Naive thymus-derived CD4-positive, alpha-beta T cell (primary cell): ENCODE measurements at regions of chr16 and their contacts with region 1.

Region 1: DNA sequence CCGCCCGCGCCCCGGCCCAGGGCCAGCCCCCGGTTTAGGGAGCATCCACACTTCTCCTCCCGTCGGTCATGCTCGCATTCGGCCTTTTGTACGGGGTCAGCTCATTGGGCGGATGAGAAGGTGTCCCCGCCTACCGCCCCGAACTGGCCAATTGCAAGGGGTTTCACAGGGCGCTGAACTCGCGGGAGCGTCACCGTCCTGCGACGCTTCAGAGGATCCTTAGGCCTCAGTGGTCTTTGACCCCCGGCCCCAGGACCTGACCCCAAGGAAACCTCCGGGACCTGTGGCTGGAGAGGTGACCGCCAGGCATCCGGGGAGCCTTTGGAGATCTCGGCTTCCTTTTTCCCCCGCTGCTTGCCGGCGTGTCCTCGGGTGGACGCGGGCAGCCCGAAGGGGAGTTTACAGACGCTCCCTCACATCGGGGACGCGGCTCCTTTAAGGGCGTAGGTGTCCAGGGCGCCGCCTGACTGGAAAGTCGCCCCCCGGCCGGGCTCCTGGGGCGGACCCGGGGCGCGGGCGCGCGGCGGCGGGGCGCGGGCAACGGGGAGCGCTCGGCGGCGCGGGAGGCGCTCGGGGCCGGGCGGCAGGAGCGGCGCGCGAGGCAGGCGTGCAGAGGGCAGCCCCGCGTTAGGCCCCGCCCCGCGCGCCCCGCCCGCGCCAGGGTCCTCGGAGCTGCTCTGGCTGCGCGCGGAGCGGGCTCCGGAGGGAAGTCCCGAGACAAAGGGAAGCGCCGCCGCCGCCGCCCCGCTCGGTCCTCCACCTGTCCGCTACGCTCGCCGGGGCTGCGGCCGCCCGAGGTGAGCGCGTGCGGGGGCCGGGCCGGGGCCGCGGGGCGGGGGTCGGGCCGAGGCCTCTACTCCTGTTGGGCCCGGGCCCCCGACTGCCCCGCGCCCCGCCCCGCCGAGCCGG is at the start of gene UBE2I:
- DNase-seq: peak; percentile 95 to 100 (median 99)
- ATAC-seq: peak; percentile 85
- H3K4me3 ChIP-seq: peak within 1 kb of the TSS; percentile 95
- H3K4me3 Mint-ChIP-seq: peak within 1 kb of the TSS; percentile 92 to 100 (median 98)
- H3K27ac ChIP-seq: peak within 1 kb of the TSS; percentile 99
- H3K27ac Mint-ChIP-seq: peak within 1 kb of the TSS; percentile 97 to 100 (median 99)
- H3K4me1 ChIP-seq: peaks cover 27 to 33% of the 10 kb centered on the region in 2 donors
- H3K4me1 Mint-ChIP-seq: peaks cover 15 to 56% (median 34%) of the 10 kb centered on the region in 7 donors
- H3K27me3 ChIP-seq: no peaks in the 10 kb centered on the region
- H3K27me3 Mint-ChIP-seq: no peaks in the 10 kb centered on the region
- total RNA-seq, gene UBE2I: 159 to 277 (median 203) TPM

Region 2: GRCh38 chr16:684067-684794 is 625.0 kb before region 1 on chr16 and contains the start of gene JMJD8:
- CTCF ChIA-PET with region 1: no interaction called
- POLR2A ChIA-PET with region 1: no interaction called
- intact Hi-C with region 1: loop called in 1 of 2 experiments (anchors 2 kb)
- DNase-seq: peak; percentile 88 to 97 (median 91)
- ATAC-seq: peak; percentile 75
- H3K4me3 ChIP-seq: peak within 1 kb of the TSS; percentile 52
- H3K4me3 Mint-ChIP-seq: peak within 1 kb of the TSS; percentile 58 to 87 (median 76)
- H3K27ac ChIP-seq: peak within 1 kb of the TSS; percentile 78
- H3K27ac Mint-ChIP-seq: peak within 1 kb of the TSS in 6 of 9 donors; percentile 38 to 82 (median 58)
- H3K4me1 ChIP-seq: peaks cover 9 to 36% of the 10 kb centered on the region in 2 donors
- H3K4me1 Mint-ChIP-seq: peaks cover 10 to 31% (median 22%) of the 10 kb centered on the region in 7 donors
- H3K27me3 ChIP-seq: no peaks in the 10 kb centered on the region
- H3K27me3 Mint-ChIP-seq: no peaks in the 10 kb centered on the region
- total RNA-seq, gene JMJD8: 26.8 to 48.1 (median 37.2) TPM

Region 3: GRCh38 chr16:1342526-1343427 is 33.5 kb after region 1 on chr16:
- CTCF ChIA-PET with region 1: no interaction called
- POLR2A ChIA-PET with region 1: interaction called, 7 read pairs
- intact Hi-C with region 1: loop called (anchors 1 to 2 kb)
- DNase-seq: peak; percentile 85 to 97 (median 94)
- ATAC-seq: peak; percentile 97
- H3K4me3 ChIP-seq: peak overlapping the region; percentile 66
- H3K4me3 Mint-ChIP-seq: peak overlapping the region; percentile 60 to 86 (median 80)
- H3K27ac ChIP-seq: no peak overlapping the region
- H3K27ac Mint-ChIP-seq: peak overlapping the region in 8 of 9 donors; percentile 14 to 79 (median 45)
- H3K4me1 ChIP-seq: peaks cover 11 to 17% of the 10 kb centered on the region in 2 donors
- H3K4me1 Mint-ChIP-seq: peaks cover 7 to 18% (median 15%) of the 10 kb centered on the region in 7 donors
- H3K27me3 ChIP-seq: no peaks in the 10 kb centered on the region
- H3K27me3 Mint-ChIP-seq: no peaks in the 10 kb centered on the region

Region 4: DNA sequence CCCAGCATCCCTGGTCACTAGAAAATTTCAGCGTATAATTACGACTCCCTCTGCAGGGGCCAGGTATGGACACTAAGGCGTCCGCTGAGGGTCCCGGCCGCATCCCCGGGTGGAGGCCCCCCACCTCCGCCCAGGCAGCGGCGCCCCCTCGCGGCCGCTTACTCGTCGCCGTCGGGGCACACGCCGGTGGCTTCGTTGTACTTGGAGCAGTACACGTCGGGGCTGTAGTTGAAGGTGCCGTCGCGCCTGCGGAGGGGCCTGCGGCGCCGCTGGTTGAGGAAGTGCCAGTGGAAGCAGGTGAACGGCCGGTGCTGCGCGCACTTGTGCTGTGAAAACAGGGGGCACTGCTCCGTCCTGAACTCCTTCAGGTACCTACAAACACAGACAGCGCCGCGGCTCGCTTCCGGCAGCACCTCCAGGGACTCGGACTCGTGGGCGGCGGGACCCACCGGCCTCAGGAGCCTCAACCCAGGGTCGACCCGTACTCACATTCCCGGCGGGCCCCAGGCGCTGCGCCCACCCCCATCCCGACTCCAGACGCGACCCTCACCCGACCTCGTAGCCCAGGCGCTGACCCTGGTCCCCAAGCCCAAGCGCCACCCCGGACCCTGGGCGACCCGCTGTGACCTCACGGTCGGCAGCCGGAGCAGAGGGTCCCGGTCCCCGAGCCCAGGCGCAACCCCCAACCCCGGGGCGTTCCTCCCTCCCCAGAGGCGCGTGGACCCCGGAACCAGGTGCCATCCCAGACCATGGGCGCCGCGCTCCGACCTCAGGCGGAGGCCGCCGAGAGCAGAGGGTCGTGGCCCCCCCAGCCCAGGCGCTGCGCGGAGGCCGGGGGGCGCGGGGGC is 104.7 kb after region 1 on chr16:
- CTCF ChIA-PET with region 1: no interaction called
- POLR2A ChIA-PET with region 1: interaction called, 4 read pairs
- intact Hi-C with region 1: loop called in 1 of 2 experiments (anchors 5 kb)
- DNase-seq: peak; percentile 44 to 77 (median 57)
- ATAC-seq: peak; percentile 66
- H3K4me3 ChIP-seq: peak overlapping the region; percentile 79
- H3K4me3 Mint-ChIP-seq: peak overlapping the region; percentile 75 to 91 (median 85)
- H3K27ac ChIP-seq: peak overlapping the region; percentile 89
- H3K27ac Mint-ChIP-seq: peak overlapping the region; percentile 70 to 92 (median 88)
- H3K4me1 ChIP-seq: peaks cover 0 to 8% of the 10 kb centered on the region in 2 donors
- H3K4me1 Mint-ChIP-seq: peaks cover 0 to 33% (median 26%) of the 10 kb centered on the region in 7 donors
- H3K27me3 ChIP-seq: no peaks in the 10 kb centered on the region
- H3K27me3 Mint-ChIP-seq: no peaks in the 10 kb centered on the region

Region 5: GRCh38 chr16:1492923-1493745 is 183.9 kb after region 1 on chr16 and contains the start of gene TELO2:
- CTCF ChIA-PET with region 1: no interaction called
- POLR2A ChIA-PET with region 1: interaction called, 3 read pairs
- intact Hi-C with region 1: loop called in 1 of 2 experiments (anchors 1 kb)
- DNase-seq: peak; percentile 82 to 96 (median 90)
- ATAC-seq: peak; percentile 96
- H3K4me3 ChIP-seq: peak within 1 kb of the TSS; percentile 59
- H3K4me3 Mint-ChIP-seq: peak within 1 kb of the TSS; percentile 83 to 99 (median 94)
- H3K27ac ChIP-seq: peak within 1 kb of the TSS; percentile 88
- H3K27ac Mint-ChIP-seq: peak within 1 kb of the TSS; percentile 97 to 100 (median 99)
- H3K4me1 ChIP-seq: peaks cover 12 to 17% of the 10 kb centered on the region in 2 donors
- H3K4me1 Mint-ChIP-seq: peaks cover 9 to 20% (median 12%) of the 10 kb centered on the region in 7 donors
- H3K27me3 ChIP-seq: no peaks in the 10 kb centered on the region
- H3K27me3 Mint-ChIP-seq: no peaks in the 10 kb centered on the region
- total RNA-seq, gene TELO2: 46.9 to 58.9 (median 50.3) TPM

Region 6: GRCh38 chr16:1782352-1783091 is 473.3 kb after region 1 on chr16 and contains the starts of genes NUBP2 and SPSB3:
- CTCF ChIA-PET with region 1: no interaction called
- POLR2A ChIA-PET with region 1: interaction called, 4 read pairs
- intact Hi-C with region 1: loop called in 1 of 2 experiments (anchors 10 kb)
- DNase-seq: peak; percentile 83 to 98 (median 97)
- ATAC-seq: peak; percentile 92
- H3K4me3 ChIP-seq: peak within 1 kb of the TSS; percentile 92
- H3K4me3 Mint-ChIP-seq: peak within 1 kb of the TSS; percentile 90 to 98 (median 94)
- H3K27ac ChIP-seq: peak within 1 kb of the TSS; percentile 76
- H3K27ac Mint-ChIP-seq: peak within 1 kb of the TSS; percentile 77 to 98 (median 93)
- H3K4me1 ChIP-seq: peaks cover 13 to 28% of the 10 kb centered on the region in 2 donors
- H3K4me1 Mint-ChIP-seq: peaks cover 0 to 48% (median 22%) of the 10 kb centered on the region in 7 donors
- H3K27me3 ChIP-seq: no peaks in the 10 kb centered on the region
- H3K27me3 Mint-ChIP-seq: peaks cover 0 to 2% (median 0%) of the 10 kb centered on the region in 5 donors
- total RNA-seq, gene NUBP2: 39.3 to 60.2 (median 48.6) TPM
- total RNA-seq, gene SPSB3: 38.2 to 127 (median 72.3) TPM

Region 7: GRCh38 chr16:1942810-1943726 is 633.8 kb after region 1 on chr16 and contains the start of gene MSRB1:
- CTCF ChIA-PET with region 1: no interaction called
- POLR2A ChIA-PET with region 1: no interaction called
- intact Hi-C with region 1: loop called in 1 of 2 experiments (anchors 5 kb)
- DNase-seq: peak; percentile 97 to 100 (median 98)
- ATAC-seq: peak; percentile 100
- H3K4me3 ChIP-seq: peak within 1 kb of the TSS; percentile 90
- H3K4me3 Mint-ChIP-seq: peak within 1 kb of the TSS; percentile 74 to 90 (median 87)
- H3K27ac ChIP-seq: peak within 1 kb of the TSS; percentile 76
- H3K27ac Mint-ChIP-seq: peak within 1 kb of the TSS; percentile 41 to 90 (median 65)
- H3K4me1 ChIP-seq: peaks cover 6 to 7% of the 10 kb centered on the region in 2 donors
- H3K4me1 Mint-ChIP-seq: peaks cover 4 to 24% (median 11%) of the 10 kb centered on the region in 7 donors
- H3K27me3 ChIP-seq: no peaks in the 10 kb centered on the region
- H3K27me3 Mint-ChIP-seq: no peaks in the 10 kb centered on the region
- total RNA-seq, gene MSRB1: 5.5 to 27.0 (median 8.2) TPM